Motor neuron (in vitro differentiated cells): ENCODE measurements at regions of chr18 and their contacts with region 1.

Region 1: DNA sequence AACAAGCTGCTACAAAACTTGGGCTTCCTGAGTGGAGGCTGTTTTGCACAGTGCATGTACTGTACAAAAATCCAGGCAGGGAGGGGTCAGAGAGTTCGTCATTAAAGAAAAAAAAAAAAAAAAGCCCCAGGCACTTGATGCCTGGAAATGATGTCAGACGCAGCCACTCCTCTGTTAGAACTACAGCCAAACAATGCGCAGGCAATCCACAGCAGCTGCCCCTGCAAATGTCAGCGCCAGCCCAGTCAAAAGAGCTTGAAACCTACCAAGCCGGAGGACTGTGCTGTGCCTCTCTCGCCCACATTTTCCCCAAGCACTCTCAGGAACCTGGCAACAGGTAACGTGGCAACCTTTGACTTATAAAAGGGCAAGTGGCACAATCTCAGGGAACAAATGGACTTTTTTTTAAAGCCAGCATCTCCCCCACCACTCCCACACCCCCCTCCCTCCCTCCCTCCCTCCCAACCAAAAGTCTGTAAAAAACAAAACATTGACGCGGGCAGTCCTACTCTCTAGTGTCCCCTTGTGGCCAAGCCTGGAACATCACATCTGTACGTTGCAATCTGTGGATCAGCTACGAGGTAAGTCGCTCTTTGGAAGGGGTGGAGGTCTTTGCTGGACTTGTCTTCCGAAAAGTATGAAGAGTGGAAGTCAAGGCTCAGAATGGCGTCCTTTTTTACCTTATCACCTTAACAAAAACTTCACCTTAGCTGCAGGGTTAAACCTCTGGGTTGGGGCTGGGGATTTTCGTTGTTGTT is 144.1 kb downstream of the TGIF1 start:
- ATAC-seq: peak; percentile 64 to 90 (median 86)
- H3K4me3 ChIP-seq: peak overlapping the region; percentile 30 to 46 (median 38)
- H3K27ac ChIP-seq: peak overlapping the region; percentile 83 to 96
- H3K4me1 ChIP-seq: peaks cover 34 to 40% of the 10 kb centered on the region in 2 donors

Region 2: DNA sequence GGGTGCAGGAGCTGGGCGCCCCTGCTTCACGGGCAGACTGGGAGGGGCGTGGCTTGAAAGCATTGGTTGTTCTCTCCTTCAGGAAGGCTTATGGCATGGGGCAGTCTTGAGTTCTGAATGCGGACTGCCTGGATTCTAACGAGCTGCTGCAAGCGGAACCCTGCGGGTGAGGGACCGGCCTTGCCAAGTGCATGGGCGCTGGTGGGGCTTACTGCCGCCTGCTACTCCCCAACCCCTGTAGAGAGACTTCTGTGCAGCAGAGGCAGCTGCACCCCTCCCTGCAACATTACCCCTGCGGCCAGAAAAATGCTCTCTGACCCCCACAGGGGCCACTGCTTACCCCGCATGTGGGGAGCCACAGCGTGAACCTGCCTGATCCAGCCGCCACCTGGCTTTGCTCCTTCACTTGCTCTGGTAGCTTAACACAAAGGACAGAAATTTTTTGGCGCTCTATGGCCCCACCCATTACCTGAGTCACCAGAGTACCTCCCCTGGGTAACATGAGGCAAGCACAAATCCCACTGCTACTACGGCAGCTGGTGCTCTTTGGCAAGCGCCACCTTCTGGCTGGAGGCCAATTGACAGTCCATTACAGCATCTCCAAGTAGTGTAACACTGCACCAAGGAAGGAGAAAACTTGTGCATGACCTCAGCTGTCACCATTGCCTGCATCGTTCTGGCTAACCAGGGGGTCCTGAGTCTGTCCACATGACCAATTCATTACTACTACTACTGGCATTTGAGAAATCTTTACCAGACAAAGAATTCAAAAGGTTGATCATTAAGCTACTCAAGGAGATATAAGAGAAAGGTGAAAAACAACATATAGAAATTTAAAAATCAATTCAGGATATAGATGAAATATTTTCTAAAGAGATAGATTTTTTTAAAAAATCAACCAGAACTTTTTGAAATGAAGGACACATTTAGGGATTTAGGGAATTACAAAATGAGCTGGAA is 296.8 kb before region 1 on chr18:
- in situ Hi-C with region 1: loop called in 4 of 9 experiments (anchors 25 kb)
- ATAC-seq: peak in 6 of 8 experiments; percentile 89 to 99 (median 94)
- H3K4me3 ChIP-seq: peak overlapping the region; percentile 1 to 43 (median 26)
- H3K27ac ChIP-seq: no peak overlapping the region
- H3K4me1 ChIP-seq: no peaks in the 10 kb centered on the region

Region 3: GRCh38 chr18:3688699-3689098 is 94.6 kb after region 1 on chr18:
- in situ Hi-C with region 1: no loop called
- ATAC-seq: peak in 4 of 8 experiments; percentile 63 to 96 (median 90)
- H3K4me3 ChIP-seq: no peak overlapping the region
- H3K27ac ChIP-seq: no peak overlapping the region
- H3K4me1 ChIP-seq: no peaks in the 10 kb centered on the region